PC-9 (cell line): ENCODE measurements at regions of chr14 and their contacts with region 1.

Region 1: GRCh38 chr14:34733235-34733634 is 18.8 kb upstream of the CFL2 start:
- DNase-seq: peak; percentile 12 to 86
- H3K4me3 ChIP-seq: no peak overlapping the region
- H3K27ac ChIP-seq: peak overlapping the region; percentile 68
- H3K4me1 ChIP-seq: peaks cover 26% of the 10 kb centered on the region
- H3K27me3 ChIP-seq: no peaks in the 10 kb centered on the region
- CTCF ChIP-seq: no peak

Region 2: GRCh38 chr14:34776611-34777010 is 43.4 kb after region 1 on chr14:
- CTCF ChIA-PET with region 1: interaction called, 3 read pairs
- POLR2A ChIA-PET with region 1: interaction called, 29 read pairs
- intact Hi-C with region 1: no loop called
- DNase-seq: no peak
- H3K4me3 ChIP-seq: no peak overlapping the region
- H3K27ac ChIP-seq: no peak overlapping the region
- H3K4me1 ChIP-seq: no peaks in the 10 kb centered on the region
- H3K27me3 ChIP-seq: no peaks in the 10 kb centered on the region
- CTCF ChIP-seq: no peak

Region 3: DNA sequence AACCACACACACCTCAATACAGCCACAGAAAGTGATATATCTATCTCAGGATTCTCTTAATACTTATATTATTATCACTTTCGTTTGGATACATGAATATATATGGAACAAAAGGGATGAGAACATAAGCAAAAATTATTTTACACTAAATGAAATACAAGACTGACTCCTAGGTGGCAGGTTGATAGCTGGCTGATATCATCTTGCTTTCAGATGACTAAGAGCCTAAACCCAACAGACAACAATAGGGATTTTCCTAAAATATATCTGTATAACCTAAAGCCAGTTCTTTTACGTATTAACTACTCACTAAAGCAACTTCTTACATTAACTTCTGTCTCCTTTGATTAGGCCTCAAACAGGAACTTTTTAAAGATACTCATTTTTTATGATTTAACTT is 76.8 kb after region 1 on chr14:
- CTCF ChIA-PET with region 1: no interaction called
- POLR2A ChIA-PET with region 1: interaction called, 17 read pairs
- intact Hi-C with region 1: no loop called
- DNase-seq: no peak
- H3K4me3 ChIP-seq: no peak overlapping the region
- H3K27ac ChIP-seq: no peak overlapping the region
- H3K4me1 ChIP-seq: no peaks in the 10 kb centered on the region
- H3K27me3 ChIP-seq: no peaks in the 10 kb centered on the region
- CTCF ChIP-seq: no peak